Activated CD4-positive, alpha-beta memory T cell treated with anti-CD3 and anti-CD28 coated beads for 36 hours (primary cell): ENCODE measurements at regions of chr17 and their contacts with region 1.

Region 1: DNA sequence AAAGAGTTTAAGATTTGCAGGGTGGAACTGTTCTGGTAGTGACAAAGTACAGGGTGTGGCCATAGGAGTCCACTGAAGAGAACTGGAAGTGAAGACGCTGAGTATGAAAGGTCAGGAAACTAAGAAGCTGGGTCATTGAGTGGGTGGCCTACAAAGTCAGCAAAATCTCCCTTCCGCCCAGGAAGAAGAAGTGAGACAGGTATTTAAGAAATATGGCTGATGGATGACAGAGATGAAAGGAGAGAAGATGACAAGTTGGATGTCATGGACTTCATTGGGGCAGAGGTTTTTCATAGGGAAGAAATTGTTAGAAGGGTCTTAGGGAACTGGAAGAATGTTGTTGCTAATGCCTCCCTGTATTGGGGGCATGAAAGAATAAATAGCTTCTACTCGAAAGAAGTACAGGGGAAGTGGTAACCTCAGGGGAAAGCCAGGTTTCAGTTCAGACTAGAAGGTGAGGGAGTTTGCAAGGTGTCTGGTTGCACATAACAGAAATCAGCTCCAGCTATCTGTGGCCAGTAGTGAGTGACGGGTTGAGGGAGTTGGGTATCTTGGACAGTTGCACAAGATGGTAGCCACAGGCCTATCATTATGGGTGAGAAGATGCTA is 33.6 kb upstream of the MED13 start:
- DNase-seq: peak; percentile 28
- H3K4me3 Mint-ChIP-seq: no peak overlapping the region
- H3K27ac Mint-ChIP-seq: peak overlapping the region; percentile 30
- H3K4me1 Mint-ChIP-seq: peaks cover 17% of the 10 kb centered on the region
- H3K27me3 Mint-ChIP-seq: no peaks in the 10 kb centered on the region

Region 2: GRCh38 chr17:61946359-61946758 is 152.4 kb before region 1 on chr17:
- CTCF ChIA-PET with region 1: no interaction called
- POLR2A ChIA-PET with region 1: no interaction called
- intact Hi-C with region 1: no loop called
- DNase-seq: no peak
- H3K4me3 Mint-ChIP-seq: no peak overlapping the region
- H3K27ac Mint-ChIP-seq: no peak overlapping the region
- H3K4me1 Mint-ChIP-seq: peaks cover 3% of the 10 kb centered on the region
- H3K27me3 Mint-ChIP-seq: no peaks in the 10 kb centered on the region

Region 3: DNA sequence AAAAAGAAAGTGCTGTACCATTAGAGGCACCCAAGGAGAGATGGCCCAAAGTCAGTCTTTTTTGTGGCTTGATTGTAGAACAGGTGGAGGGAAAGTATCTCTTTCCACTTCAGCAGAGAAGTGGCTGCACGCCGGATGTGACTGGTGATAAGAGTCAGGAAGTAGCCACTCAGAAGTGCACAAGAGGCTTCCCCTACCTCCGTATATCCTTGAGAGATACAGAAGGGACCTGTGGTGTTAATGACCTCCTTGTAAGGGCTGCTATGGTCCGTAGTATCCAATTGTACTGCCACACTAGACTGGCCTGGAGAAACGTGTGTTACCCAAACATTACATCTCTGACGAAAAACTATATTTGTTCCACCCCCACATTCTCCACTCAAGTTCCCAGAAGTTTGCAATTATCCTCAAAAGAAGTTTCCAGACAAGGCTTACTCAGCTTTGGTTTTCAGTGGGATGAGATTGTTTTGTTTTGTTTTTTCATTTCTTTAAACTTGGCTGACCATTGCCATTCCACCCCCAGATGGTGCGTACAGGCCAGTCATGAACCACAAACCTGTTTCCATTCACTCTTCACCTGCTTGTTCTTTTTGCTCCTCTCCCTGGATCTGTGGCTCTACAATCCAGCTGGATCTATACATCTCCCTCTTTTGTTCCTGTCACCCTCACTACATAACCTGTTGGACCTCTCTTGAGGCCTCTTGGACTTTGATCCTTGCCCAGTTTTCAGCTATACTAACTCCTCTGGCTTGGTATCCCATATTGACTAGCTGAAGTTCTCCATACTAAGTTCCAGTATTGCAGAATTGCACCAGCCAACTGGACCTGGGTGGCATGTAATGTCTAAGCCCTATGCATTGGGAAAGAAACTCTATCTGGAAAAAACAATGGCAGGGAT is 13.0 kb before region 1 on chr17:
- CTCF ChIA-PET with region 1: no interaction called
- POLR2A ChIA-PET with region 1: no interaction called
- intact Hi-C with region 1: loop called (anchors 1 kb)
- DNase-seq: peak; percentile 57
- H3K4me3 Mint-ChIP-seq: no peak overlapping the region
- H3K27ac Mint-ChIP-seq: no peak overlapping the region
- H3K4me1 Mint-ChIP-seq: peaks cover 21% of the 10 kb centered on the region
- H3K27me3 Mint-ChIP-seq: no peaks in the 10 kb centered on the region

Region 4: GRCh38 chr17:62206543-62206942 is 107.8 kb after region 1 on chr17:
- CTCF ChIA-PET with region 1: no interaction called
- POLR2A ChIA-PET with region 1: no interaction called
- intact Hi-C with region 1: no loop called
- DNase-seq: no peak
- H3K4me3 Mint-ChIP-seq: no peak overlapping the region
- H3K27ac Mint-ChIP-seq: no peak overlapping the region
- H3K4me1 Mint-ChIP-seq: no peaks in the 10 kb centered on the region
- H3K27me3 Mint-ChIP-seq: peaks cover 6% of the 10 kb centered on the region